Activated naive CD4-positive, alpha-beta T cell treated with anti-CD3 and anti-CD28 coated beads for 36 hours (primary cell): ENCODE measurements at regions of chr15 and their contacts with region 1.

Region 1: DNA sequence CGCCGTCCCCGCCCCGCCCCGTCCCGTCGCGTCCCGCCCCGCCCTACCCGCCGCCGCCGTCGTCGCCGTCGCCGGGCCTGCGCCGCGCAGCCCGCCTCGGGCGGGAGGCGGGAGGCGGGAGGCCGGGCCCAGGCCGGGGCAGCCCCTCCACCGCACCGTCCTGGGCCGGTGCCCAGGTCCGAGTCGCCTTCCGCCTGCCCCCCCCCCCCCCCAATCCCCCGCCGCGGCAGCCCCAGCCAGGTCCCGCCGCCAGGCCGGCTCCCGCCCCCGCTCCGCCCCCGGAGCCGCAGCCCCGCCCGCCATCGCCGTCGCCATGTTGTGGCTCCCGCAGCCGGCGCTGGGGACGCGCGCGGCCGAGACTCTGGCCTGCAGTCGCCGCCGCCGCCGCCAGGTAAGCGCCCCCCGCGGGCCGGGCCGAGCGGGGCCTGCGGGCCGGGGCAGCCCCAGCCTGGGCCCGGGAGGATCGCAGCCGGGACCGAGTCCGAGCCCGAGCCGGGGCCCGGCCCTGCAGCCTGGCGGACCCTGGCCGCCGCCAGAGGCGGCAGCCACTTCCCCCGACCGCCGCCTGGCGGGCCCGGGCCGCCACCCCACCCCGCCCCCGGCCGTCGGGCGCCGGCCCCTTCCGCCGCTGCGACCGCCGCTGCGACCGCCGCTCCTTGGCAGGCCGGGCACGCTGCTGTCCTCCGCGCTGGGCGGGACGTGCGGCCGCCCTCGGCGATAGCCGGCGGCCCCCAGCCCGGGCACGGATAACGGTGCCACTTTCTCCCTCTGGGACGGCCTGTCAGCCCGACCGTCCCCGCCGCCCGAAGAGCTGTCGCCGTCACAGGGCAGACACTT is at the start of gene ZNF592:
- DNase-seq: peak; percentile 79
- H3K4me3 Mint-ChIP-seq: peak within 1 kb of the TSS; percentile 97
- H3K27ac Mint-ChIP-seq: peak within 1 kb of the TSS; percentile 98
- H3K4me1 Mint-ChIP-seq: peaks cover 54% of the 10 kb centered on the region
- H3K27me3 Mint-ChIP-seq: no peaks in the 10 kb centered on the region
- total RNA-seq, gene ZNF592: 24.2 to 24.3 TPM

Region 2: GRCh38 chr15:83644439-83644838 is 1104.1 kb before region 1 on chr15:
- CTCF ChIA-PET with region 1: no interaction called
- intact Hi-C with region 1: no loop called
- DNase-seq: no peak
- H3K4me3 Mint-ChIP-seq: no peak overlapping the region
- H3K27ac Mint-ChIP-seq: no peak overlapping the region
- H3K4me1 Mint-ChIP-seq: no peaks in the 10 kb centered on the region
- H3K27me3 Mint-ChIP-seq: peaks cover 3% of the 10 kb centered on the region

Region 3: GRCh38 chr15:84633311-84634227 is 114.9 kb before region 1 on chr15:
- CTCF ChIA-PET with region 1: no interaction called
- intact Hi-C with region 1: loop called (anchors 1 kb)
- DNase-seq: peak; percentile 63
- H3K4me3 Mint-ChIP-seq: peak overlapping the region; percentile 94
- H3K27ac Mint-ChIP-seq: peak overlapping the region; percentile 93
- H3K4me1 Mint-ChIP-seq: peaks cover 46% of the 10 kb centered on the region
- H3K27me3 Mint-ChIP-seq: no peaks in the 10 kb centered on the region

Region 4: GRCh38 chr15:84761607-84762131 is 13.2 kb after region 1 on chr15:
- CTCF ChIA-PET with region 1: no interaction called
- intact Hi-C with region 1: loop called (anchors 1 kb)
- DNase-seq: peak; percentile 20
- H3K4me3 Mint-ChIP-seq: no peak overlapping the region
- H3K27ac Mint-ChIP-seq: no peak overlapping the region
- H3K4me1 Mint-ChIP-seq: peaks cover 28% of the 10 kb centered on the region
- H3K27me3 Mint-ChIP-seq: no peaks in the 10 kb centered on the region